Activated B cell treated with CpG ODN at 0.5 μM for 24 hours (primary cell): ENCODE measurements at regions of chr5 and their contacts with region 1.

Region 1: DNA sequence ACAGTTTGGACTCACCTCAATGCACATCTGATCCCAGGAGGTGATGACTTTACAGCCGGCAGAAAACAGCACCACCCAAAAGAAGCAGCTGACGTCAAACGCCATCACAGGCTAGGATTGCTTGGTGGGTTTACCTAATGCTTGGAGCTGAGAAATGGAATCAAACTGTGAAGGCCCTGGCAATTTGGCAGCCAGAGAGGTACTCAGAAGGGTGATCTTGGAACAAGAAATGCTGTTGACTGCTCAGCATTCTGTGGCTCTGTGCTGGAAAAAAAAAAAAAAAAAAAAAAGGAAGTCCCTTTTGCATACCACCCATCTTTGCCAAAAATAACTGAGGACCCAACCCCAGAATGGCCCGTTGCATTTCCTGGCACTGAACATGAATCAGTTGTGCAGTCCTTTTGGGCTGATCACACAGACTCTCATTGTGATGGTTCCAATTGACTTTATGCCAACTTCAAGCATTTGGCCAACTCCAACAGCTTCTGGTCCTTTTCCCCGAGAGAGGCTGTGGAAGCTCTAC is at the start of gene CD180:
- DNase-seq: no peak
- ATAC-seq: peak; percentile 32
- H3K4me3 Mint-ChIP-seq: peak within 1 kb of the TSS; percentile 91
- H3K27ac Mint-ChIP-seq: peak within 1 kb of the TSS; percentile 98
- H3K4me1 Mint-ChIP-seq: peaks cover 97% of the 10 kb centered on the region
- H3K27me3 Mint-ChIP-seq: no peaks in the 10 kb centered on the region
- CTCF ChIP-seq: no peak
- total RNA-seq, gene CD180: 32.6 and 35.7 TPM in 2 replicates

Region 2: DNA sequence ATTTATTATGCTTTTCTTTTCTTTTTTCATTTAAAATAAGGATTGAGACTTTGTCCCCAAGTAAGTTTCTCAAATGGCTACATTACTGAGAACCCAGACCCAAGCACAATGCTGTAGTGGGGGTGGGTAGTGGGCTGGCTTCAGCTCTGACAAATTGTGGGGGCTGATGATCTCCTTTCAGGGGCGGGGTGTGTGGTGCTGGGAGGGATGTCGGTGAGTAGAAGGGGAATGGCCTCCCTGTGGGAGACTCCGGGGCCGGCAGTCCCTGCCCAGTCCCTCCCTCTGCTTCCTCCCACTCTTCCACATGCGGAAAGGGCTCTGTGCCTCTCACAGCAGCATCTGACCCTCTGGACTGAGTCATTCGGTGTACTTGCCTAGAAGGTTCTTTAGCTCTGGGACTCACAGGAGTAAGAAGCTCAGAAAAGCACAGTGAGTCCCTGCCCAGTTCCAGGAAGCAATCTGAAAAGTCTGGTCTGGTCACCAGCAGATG is 14.3 kb before region 1 on chr5:
- CTCF ChIA-PET with region 1: interaction called, 3 read pairs
- POLR2A ChIA-PET with region 1: interaction called, 5 read pairs
- intact Hi-C with region 1: loop called (anchors 1 kb)
- DNase-seq: no peak
- ATAC-seq: no peak
- H3K4me3 Mint-ChIP-seq: no peak overlapping the region
- H3K27ac Mint-ChIP-seq: peak overlapping the region; percentile 86
- H3K4me1 Mint-ChIP-seq: peaks cover 84% of the 10 kb centered on the region
- H3K27me3 Mint-ChIP-seq: no peaks in the 10 kb centered on the region
- CTCF ChIP-seq: no peak

Region 3: GRCh38 chr5:67215583-67216471 is 19.2 kb after region 1 on chr5:
- CTCF ChIA-PET with region 1: interaction called, 5 read pairs
- POLR2A ChIA-PET with region 1: interaction called, 28 read pairs
- intact Hi-C with region 1: no loop called
- DNase-seq: peak; percentile 70
- ATAC-seq: peak; percentile 98
- H3K4me3 Mint-ChIP-seq: peak overlapping the region; percentile 76
- H3K27ac Mint-ChIP-seq: peak overlapping the region; percentile 98
- H3K4me1 Mint-ChIP-seq: peaks cover 58% of the 10 kb centered on the region
- H3K27me3 Mint-ChIP-seq: no peaks in the 10 kb centered on the region
- CTCF ChIP-seq: no peak

Region 4: DNA sequence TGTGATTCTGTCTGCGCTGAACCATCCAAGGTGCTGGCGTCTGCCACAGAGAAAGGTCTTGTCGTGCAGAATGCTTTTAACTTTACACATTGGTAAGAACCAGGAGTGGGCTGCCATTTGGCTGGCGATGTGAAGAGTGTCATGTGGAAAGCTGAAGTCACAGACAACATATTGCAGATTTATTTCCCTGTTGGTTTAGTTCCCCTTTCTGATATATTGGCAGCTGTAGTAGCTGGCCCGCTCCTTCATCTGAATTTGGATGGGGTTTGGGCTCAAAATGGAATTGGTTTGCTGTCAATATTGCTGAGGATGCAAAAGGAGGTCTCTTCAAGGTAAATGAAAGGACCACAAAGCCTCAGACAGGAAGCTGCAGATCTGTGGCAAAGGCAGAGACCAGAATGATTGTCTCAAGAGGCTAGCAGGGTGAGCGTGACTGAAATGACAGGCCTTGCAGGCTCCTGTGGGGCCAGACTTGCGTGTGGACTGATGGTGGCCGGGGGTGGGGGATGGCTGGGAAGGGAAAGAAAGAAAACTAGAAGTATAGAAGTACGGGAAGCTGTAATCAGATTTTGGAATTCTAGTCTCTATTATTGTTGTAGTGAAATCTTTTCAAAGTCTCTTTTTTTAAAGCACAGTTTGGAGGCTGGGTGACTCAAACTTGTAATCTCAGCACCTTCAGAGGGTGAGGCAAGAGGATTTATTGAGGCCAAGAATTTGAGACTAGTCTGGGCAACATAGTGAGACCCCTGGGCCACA is 25.1 kb after region 1 on chr5:
- CTCF ChIA-PET with region 1: interaction called, 3 read pairs
- POLR2A ChIA-PET with region 1: interaction called, 28 read pairs
- intact Hi-C with region 1: no loop called
- DNase-seq: no peak
- ATAC-seq: peak; percentile 75
- H3K4me3 Mint-ChIP-seq: peak overlapping the region; percentile 78
- H3K27ac Mint-ChIP-seq: peak overlapping the region; percentile 97
- H3K4me1 Mint-ChIP-seq: peaks cover 65% of the 10 kb centered on the region
- H3K27me3 Mint-ChIP-seq: no peaks in the 10 kb centered on the region
- CTCF ChIP-seq: no peak